Sigmoid colon (tissue), 7 donors: ENCODE measurements at regions of chr14 and their contacts with region 1.

Region 1: DNA sequence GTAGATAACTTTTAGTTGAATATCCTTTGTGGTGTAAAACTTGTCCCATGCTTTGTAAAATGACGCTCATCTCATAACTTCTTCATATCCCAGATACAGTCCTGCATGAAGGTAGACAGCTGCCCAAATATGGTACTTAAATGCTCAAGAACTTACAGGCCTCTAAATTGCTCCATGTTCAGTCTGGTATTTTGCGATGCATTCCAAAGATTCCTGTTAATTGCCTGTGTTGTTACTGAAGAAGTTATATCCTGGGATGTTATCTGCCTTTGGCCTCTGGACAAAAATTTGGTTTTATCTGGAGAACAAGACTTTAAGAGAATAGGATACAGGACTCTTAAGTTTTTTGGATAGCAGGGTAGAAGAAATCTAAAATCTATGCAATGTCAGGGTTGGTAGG is 473.0 kb downstream of the PCNX1 start:
- DNase-seq: no peak
- H3K4me3 ChIP-seq: no peak overlapping the region
- H3K27ac ChIP-seq: peak overlapping the region in 2 of 4 donors; percentile 9 to 13
- H3K4me1 ChIP-seq: peaks cover 0 to 26% (median 8%) of the 10 kb centered on the region in 4 donors
- H3K27me3 ChIP-seq: no peaks in the 10 kb centered on the region
- CTCF ChIP-seq: no peak
- EP300 ChIP-seq: no peak
- POLR2A ChIP-seq: no peak

Region 2: DNA sequence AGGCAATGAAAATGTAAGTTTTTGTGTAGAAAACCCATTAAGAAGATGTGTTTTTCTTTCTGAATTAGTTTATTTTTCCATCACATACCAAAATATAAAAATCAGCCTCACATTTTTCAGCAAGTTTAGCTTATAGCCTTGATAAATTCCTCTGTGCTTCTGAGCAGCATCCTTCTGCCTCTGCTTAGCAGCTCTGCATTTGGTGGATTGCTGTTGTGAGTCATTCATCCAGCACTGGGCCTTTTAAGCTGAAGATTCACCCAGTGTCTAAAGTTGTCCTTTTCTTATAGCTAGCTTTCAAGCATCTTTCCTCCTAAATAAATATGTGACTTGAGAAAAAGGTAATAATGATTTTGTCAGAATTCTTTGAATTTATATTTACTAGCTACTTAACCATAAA is 266.9 kb before region 1 on chr14:
- intact Hi-C with region 1: no loop called
- DNase-seq: no peak
- H3K4me3 ChIP-seq: no peak overlapping the region
- H3K27ac ChIP-seq: no peak overlapping the region
- H3K4me1 ChIP-seq: peaks cover 0 to 26% (median 25%) of the 10 kb centered on the region in 4 donors
- H3K27me3 ChIP-seq: no peaks in the 10 kb centered on the region
- CTCF ChIP-seq: no peak
- EP300 ChIP-seq: no peak
- POLR2A ChIP-seq: no peak

Region 3: GRCh38 chr14:71346685-71347084 is 33.6 kb before region 1 on chr14:
- intact Hi-C with region 1: no loop called
- DNase-seq: no peak
- H3K4me3 ChIP-seq: no peak overlapping the region
- H3K27ac ChIP-seq: no peak overlapping the region
- H3K4me1 ChIP-seq: peaks cover 0 to 29% (median 17%) of the 10 kb centered on the region in 4 donors
- H3K27me3 ChIP-seq: no peaks in the 10 kb centered on the region
- CTCF ChIP-seq: no peak
- EP300 ChIP-seq: no peak
- POLR2A ChIP-seq: no peak

Region 4: DNA sequence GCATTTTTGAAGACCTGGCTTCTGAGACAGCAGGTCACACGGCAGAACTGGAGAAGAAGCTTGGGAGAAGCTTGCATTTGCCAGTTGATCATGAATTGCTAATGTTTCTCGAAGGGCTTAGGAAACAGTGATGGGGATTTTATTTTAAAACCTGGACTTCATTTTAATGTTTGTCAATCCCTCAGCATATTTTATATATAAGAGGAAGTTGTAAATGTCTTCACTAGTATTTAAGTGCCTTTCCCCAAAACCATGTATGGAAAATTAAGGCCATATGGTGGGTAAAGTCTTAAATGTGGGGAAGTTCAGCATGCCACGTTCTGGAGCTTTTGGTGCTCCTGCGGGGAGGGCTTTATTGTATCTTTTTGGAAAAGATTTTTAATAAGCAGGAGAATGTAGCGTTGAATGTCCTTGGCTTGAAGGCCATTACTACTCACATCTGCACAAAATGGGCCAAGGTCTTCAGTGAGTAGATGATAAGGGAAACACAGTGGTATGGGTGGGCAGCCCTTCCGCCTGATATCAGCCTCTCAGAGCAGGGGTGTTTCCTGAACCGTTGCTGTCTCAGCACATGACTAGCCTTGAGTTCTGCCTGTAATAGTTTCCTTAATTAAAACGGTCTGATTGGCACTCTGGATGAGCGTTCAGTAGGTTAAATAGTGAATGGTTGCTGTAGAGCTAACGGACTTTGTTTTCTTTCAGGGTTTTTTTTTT is 38.4 kb after region 1 on chr14:
- intact Hi-C with region 1: loop called (anchors 2 kb)
- DNase-seq: no peak
- H3K4me3 ChIP-seq: no peak overlapping the region
- H3K27ac ChIP-seq: no peak overlapping the region
- H3K4me1 ChIP-seq: peaks cover 0 to 17% (median 15%) of the 10 kb centered on the region in 4 donors
- H3K27me3 ChIP-seq: no peaks in the 10 kb centered on the region
- CTCF ChIP-seq: no peak
- EP300 ChIP-seq: no peak
- POLR2A ChIP-seq: no peak